ENCODE measurements at regions of chr19 and their contacts with region 1.

Region 1: DNA sequence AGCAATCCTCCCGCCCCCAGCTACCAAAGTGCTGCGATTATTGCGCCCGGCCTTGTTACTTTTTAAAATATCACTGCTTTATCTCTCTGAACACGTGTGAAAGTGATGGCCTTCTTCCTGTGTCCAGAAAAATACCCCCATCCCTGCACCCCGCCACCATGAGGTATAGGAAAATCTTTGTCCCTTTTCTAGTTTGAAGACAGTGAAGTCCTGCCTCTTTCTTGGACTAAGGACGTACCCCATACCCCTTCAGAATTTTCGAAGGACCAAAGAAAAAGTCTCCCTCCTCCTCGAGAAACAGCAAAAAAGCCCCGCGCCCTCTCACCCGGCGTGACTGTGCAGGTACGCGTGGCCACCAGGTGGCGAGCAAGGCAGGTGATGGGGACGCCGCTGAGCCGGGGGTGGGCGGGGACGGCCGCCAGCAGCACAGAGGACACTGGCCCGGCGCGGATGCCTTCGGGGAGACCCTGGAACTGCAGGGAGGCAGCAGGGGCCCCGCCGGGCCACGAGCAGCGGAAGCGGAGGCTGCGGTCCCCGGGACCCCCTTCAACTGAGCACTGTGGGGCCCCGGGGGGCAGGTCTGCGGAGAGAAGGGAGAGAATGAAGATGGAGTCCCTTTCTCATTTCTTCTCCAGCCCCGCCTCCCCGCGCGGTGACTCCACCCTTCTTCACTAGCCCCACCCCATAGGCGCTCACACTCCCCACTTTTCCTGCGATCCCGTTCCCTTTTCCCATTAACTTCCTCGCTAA is 3.2 kb downstream of the VSIG10L start:
- DNase-seq: peak; percentile 81 to 82
- ATAC-seq: peak; percentile 66 to 88 (median 76)
- H3K4me3 ChIP-seq: peak overlapping the region; percentile 47 to 77 (median 62)
- H3K27ac ChIP-seq: peak overlapping the region in 6 of 10 donors; percentile 19 to 72 (median 34)
- H3K4me1 ChIP-seq: peaks cover 0 to 24% (median 19%) of the 10 kb centered on the region in 9 donors
- H3K27me3 ChIP-seq: no peaks in the 10 kb centered on the region
- CTCF ChIP-seq: peak; percentile 69 to 94 (median 84)

Region 2: GRCh38 chr19:51203916-51204315 is 134.8 kb before region 1 on chr19:
- intact Hi-C with region 1: no loop called
- DNase-seq: no peak
- ATAC-seq: no peak
- H3K4me3 ChIP-seq: no peak overlapping the region
- H3K27ac ChIP-seq: no peak overlapping the region
- H3K4me1 ChIP-seq: peaks cover 0 to 17% (median 0%) of the 10 kb centered on the region in 9 donors
- H3K27me3 ChIP-seq: peaks cover 0 to 35% (median 25%) of the 10 kb centered on the region in 7 donors
- CTCF ChIP-seq: no peak

Region 3: DNA sequence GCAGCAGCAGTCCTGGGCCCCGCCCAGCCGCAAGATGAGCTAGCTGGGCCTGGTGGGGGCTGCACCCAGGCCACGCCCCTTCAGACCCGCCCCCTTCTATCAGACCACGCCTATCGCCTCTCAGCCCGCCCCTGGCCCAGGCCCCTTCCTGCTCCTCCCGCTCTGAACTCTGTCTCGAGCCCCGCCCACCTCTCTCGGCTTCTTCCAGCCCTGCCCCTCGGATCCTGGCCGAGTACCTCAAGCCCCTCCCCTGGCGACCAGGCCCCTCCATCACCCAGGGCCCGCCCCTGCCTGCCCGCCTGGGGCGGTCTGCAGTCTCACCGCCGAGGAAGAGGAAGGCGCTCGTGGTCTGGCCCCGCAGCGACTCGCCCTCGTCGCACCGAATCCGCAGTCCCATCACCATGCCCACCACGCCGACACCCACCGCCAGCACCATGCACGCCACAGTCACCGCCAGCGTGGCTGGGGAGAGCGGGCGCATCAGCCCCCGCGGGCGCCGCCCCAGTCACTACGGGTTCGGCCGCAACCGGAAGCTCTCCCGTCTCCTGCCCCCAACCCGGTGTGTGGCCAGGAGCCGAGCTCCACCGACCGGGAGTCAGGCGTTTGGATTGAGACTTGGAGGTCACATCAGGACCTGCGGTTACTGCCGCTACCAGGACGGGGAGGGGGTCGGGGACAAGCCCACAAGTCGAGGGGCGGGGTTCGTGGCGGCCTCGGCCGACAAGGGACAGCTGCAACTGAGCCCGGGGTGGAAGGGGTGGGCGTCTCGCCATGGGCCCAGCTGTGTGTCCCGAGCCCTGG is 29.0 kb after region 1 on chr19:
- intact Hi-C with region 1: loop called in 4 of 10 experiments (anchors 1 to 2 kb)
- DNase-seq: peak; percentile 99
- ATAC-seq: peak; percentile 90 to 96 (median 93)
- H3K4me3 ChIP-seq: peak overlapping the region; percentile 60 to 93 (median 80)
- H3K27ac ChIP-seq: peak overlapping the region; percentile 89 to 98 (median 96)
- H3K4me1 ChIP-seq: peaks cover 0 to 50% (median 24%) of the 10 kb centered on the region in 9 donors
- H3K27me3 ChIP-seq: no peaks in the 10 kb centered on the region
- CTCF ChIP-seq: peak in 1 of 9 donors; percentile 6

Region 4: DNA sequence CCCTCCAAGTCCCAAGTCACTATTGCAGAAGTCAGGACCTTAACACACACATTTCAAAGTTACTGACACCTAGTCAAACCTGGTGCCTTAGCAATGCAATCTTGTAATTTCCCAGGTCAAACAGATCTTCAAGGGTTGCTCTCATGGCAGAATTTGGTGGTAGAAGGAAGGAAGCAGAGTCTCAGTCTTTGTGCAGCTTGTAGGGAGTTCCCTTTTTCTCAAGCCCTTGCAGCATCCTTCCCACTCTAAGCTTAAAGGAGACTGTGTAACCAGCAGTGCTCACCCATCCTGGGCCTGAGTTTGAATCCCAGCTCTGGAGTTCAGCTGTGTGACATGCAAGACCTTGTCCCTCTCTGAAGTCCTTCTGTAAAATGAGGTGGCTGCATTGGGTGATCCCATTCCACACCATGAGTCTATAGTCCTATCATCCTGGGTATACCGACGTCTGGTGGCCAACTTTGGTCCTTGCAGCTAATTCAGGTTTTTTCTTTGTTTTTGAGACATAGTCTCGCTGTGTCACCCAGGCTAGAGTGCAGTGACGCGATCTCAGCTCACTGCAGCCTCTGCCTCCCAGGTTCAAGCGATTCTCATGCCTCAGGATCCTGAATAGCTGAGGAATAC is 68.9 kb after region 1 on chr19:
- intact Hi-C with region 1: loop called in 2 of 10 experiments (anchors 5 kb)
- DNase-seq: no peak
- ATAC-seq: peak in 2 of 8 donors; percentile 20 to 31
- H3K4me3 ChIP-seq: no peak overlapping the region
- H3K27ac ChIP-seq: peak overlapping the region in 1 of 10 donors; percentile 59
- H3K4me1 ChIP-seq: peaks cover 0 to 35% (median 0%) of the 10 kb centered on the region in 9 donors
- H3K27me3 ChIP-seq: peaks cover 0 to 12% (median 0%) of the 10 kb centered on the region in 7 donors
- CTCF ChIP-seq: peak in 7 of 9 donors; percentile 23 to 43 (median 33)

Region 5: GRCh38 chr19:51473009-51473707 is 134.4 kb after region 1 on chr19:
- intact Hi-C with region 1: loop called in 1 of 10 experiments (anchors 1 kb)
- DNase-seq: peak; percentile 50 to 79
- ATAC-seq: peak in 5 of 8 donors; percentile 62 to 79 (median 77)
- H3K4me3 ChIP-seq: no peak overlapping the region
- H3K27ac ChIP-seq: no peak overlapping the region
- H3K4me1 ChIP-seq: no peaks in the 10 kb centered on the region
- H3K27me3 ChIP-seq: peaks cover 0 to 73% (median 28%) of the 10 kb centered on the region in 7 donors
- CTCF ChIP-seq: peak; percentile 75 to 94 (median 89)

Region 6: GRCh38 chr19:51651216-51651846 is 312.6 kb after region 1 on chr19:
- intact Hi-C with region 1: loop called in 5 of 10 experiments (anchors 10 kb)
- DNase-seq: no peak
- ATAC-seq: peak in 2 of 8 donors; percentile 53 to 76
- H3K4me3 ChIP-seq: no peak overlapping the region
- H3K27ac ChIP-seq: peak overlapping the region in 1 of 10 donors; percentile 33
- H3K4me1 ChIP-seq: peaks cover 0 to 29% (median 0%) of the 10 kb centered on the region in 9 donors
- H3K27me3 ChIP-seq: peaks cover 0 to 29% (median 8%) of the 10 kb centered on the region in 7 donors
- CTCF ChIP-seq: no peak